BJ (cell line): ENCODE measurements at regions of chr7 and their contacts with region 1.

Region 1: GRCh38 chr7:24812310-24812945 is 55.2 kb upstream of the GSDME start:
- DNase-seq: no peak
- H3K4me3 ChIP-seq: no peak overlapping the region
- H3K27me3 ChIP-seq: no peaks in the 10 kb centered on the region
- CTCF ChIP-seq: peak; percentile 83

Region 2: GRCh38 chr7:24075426-24075810 is 737.0 kb before region 1 on chr7:
- CTCF ChIA-PET with region 1: no interaction called
- POLR2A ChIA-PET with region 1: no interaction called
- DNase-seq: no peak
- H3K4me3 ChIP-seq: no peak overlapping the region
- H3K27me3 ChIP-seq: no peaks in the 10 kb centered on the region
- CTCF ChIP-seq: no peak

Region 3: GRCh38 chr7:24536682-24537081 is 275.7 kb before region 1 on chr7:
- CTCF ChIA-PET with region 1: no interaction called
- POLR2A ChIA-PET with region 1: no interaction called
- DNase-seq: no peak
- H3K4me3 ChIP-seq: no peak overlapping the region
- H3K27me3 ChIP-seq: peaks cover 1% of the 10 kb centered on the region; the same call in 1 of the 2 replicates
- CTCF ChIP-seq: no peak

Region 4: GRCh38 chr7:24800667-24801066 is 11.8 kb before region 1 on chr7:
- CTCF ChIA-PET with region 1: interaction called, 13 read pairs
- POLR2A ChIA-PET with region 1: no interaction called
- DNase-seq: no peak
- H3K4me3 ChIP-seq: no peak overlapping the region
- H3K27me3 ChIP-seq: no peaks in the 10 kb centered on the region
- CTCF ChIP-seq: no peak

Region 5: GRCh38 chr7:24979863-24980533 is 167.6 kb after region 1 on chr7 and contains the start of gene OSBPL3:
- CTCF ChIA-PET with region 1: interaction called, 49 read pairs
- POLR2A ChIA-PET with region 1: no interaction called
- DNase-seq: peak; percentile 71
- H3K4me3 ChIP-seq: peak within 1 kb of the TSS; percentile 60
- H3K27me3 ChIP-seq: no peaks in the 10 kb centered on the region
- CTCF ChIP-seq: no peak
- polyA plus RNA-seq, gene OSBPL3: 26.5 and 27.1 TPM in 2 replicates

Region 6: GRCh38 chr7:24991353-24991752 is 178.9 kb after region 1 on chr7:
- CTCF ChIA-PET with region 1: no interaction called
- POLR2A ChIA-PET with region 1: no interaction called
- DNase-seq: no peak
- H3K4me3 ChIP-seq: no peak overlapping the region
- H3K27me3 ChIP-seq: no peaks in the 10 kb centered on the region
- CTCF ChIP-seq: no peak

Region 7: GRCh38 chr7:25054819-25055519 is 242.5 kb after region 1 on chr7:
- CTCF ChIA-PET with region 1: no interaction called
- POLR2A ChIA-PET with region 1: no interaction called
- DNase-seq: no peak
- H3K4me3 ChIP-seq: no peak overlapping the region
- H3K27me3 ChIP-seq: no peaks in the 10 kb centered on the region
- CTCF ChIP-seq: no peak

Region 8: GRCh38 chr7:25069900-25070443 is 257.5 kb after region 1 on chr7:
- CTCF ChIA-PET with region 1: interaction called, 32 read pairs
- POLR2A ChIA-PET with region 1: no interaction called
- DNase-seq: peak; percentile 49
- H3K4me3 ChIP-seq: no peak overlapping the region
- H3K27me3 ChIP-seq: no peaks in the 10 kb centered on the region
- CTCF ChIP-seq: peak; percentile 77